ENCODE measurements at regions of chr1 and their contacts with region 1.

Region 1: GRCh38 chr1:25037174-25038074 is 107.3 kb upstream of the RUNX3 start:
- DNase-seq: peak; percentile 75
- ATAC-seq: peak; percentile 22
- H3K4me3 Mint-ChIP-seq: no peak overlapping the region
- H3K27ac Mint-ChIP-seq: peak overlapping the region; percentile 39
- H3K4me1 Mint-ChIP-seq: peaks cover 28% of the 10 kb centered on the region
- H3K27me3 Mint-ChIP-seq: peaks cover 3% of the 10 kb centered on the region

Region 2: GRCh38 chr1:24930204-24931145 is 106.9 kb before region 1 on chr1 and contains the start of gene RUNX3:
- CTCF ChIA-PET with region 1: interaction called, 85 read pairs
- POLR2A ChIA-PET with region 1: interaction called, 3 read pairs
- DNase-seq: peak; percentile 92
- ATAC-seq: peak; percentile 79
- H3K4me3 Mint-ChIP-seq: peak within 1 kb of the TSS; percentile 95
- H3K27ac Mint-ChIP-seq: peak within 1 kb of the TSS; percentile 85
- H3K4me1 Mint-ChIP-seq: peaks cover 80% of the 10 kb centered on the region
- H3K27me3 Mint-ChIP-seq: no peaks in the 10 kb centered on the region
- total RNA-seq, gene RUNX3: 144 to 147 TPM

Region 3: GRCh38 chr1:24955161-24955560 is 82.3 kb before region 1 on chr1:
- CTCF ChIA-PET with region 1: interaction called, 225 read pairs
- POLR2A ChIA-PET with region 1: interaction called, 96 read pairs
- DNase-seq: peak; percentile 90
- ATAC-seq: peak; percentile 81
- H3K4me3 Mint-ChIP-seq: peak overlapping the region; percentile 73
- H3K27ac Mint-ChIP-seq: peak overlapping the region; percentile 94
- H3K4me1 Mint-ChIP-seq: peaks cover 95% of the 10 kb centered on the region
- H3K27me3 Mint-ChIP-seq: no peaks in the 10 kb centered on the region

Region 4: DNA sequence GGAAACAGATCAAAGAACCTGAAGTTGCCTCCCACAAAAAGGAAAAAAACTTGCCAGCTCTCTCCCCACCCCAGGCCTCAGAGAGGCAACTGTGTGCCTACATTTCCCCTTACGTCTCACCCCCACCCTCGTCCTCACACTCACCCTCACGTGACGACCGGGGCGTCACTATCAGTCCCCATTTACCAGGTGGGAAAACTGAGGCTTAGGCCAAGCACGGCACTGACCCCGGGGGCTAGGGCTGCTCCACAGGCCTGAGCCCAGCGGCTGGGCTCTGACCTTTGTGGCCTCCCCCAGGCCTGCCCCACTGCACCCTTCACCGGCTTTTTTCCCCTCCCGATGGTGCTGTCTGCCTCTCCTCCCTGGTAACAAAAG is 55.8 kb before region 1 on chr1:
- CTCF ChIA-PET with region 1: interaction called, 20 read pairs
- POLR2A ChIA-PET with region 1: interaction called, 3 read pairs
- DNase-seq: peak; percentile 70
- ATAC-seq: peak; percentile 52
- H3K4me3 Mint-ChIP-seq: peak overlapping the region; percentile 63
- H3K27ac Mint-ChIP-seq: peak overlapping the region; percentile 93
- H3K4me1 Mint-ChIP-seq: peaks cover 93% of the 10 kb centered on the region
- H3K27me3 Mint-ChIP-seq: no peaks in the 10 kb centered on the region

Region 5: GRCh38 chr1:25006770-25007169 is 30.7 kb before region 1 on chr1:
- CTCF ChIA-PET with region 1: interaction called, 23 read pairs
- POLR2A ChIA-PET with region 1: interaction called, 6 read pairs
- DNase-seq: no peak
- ATAC-seq: no peak
- H3K4me3 Mint-ChIP-seq: no peak overlapping the region
- H3K27ac Mint-ChIP-seq: peak overlapping the region; percentile 36
- H3K4me1 Mint-ChIP-seq: peaks cover 88% of the 10 kb centered on the region
- H3K27me3 Mint-ChIP-seq: no peaks in the 10 kb centered on the region

Region 6: DNA sequence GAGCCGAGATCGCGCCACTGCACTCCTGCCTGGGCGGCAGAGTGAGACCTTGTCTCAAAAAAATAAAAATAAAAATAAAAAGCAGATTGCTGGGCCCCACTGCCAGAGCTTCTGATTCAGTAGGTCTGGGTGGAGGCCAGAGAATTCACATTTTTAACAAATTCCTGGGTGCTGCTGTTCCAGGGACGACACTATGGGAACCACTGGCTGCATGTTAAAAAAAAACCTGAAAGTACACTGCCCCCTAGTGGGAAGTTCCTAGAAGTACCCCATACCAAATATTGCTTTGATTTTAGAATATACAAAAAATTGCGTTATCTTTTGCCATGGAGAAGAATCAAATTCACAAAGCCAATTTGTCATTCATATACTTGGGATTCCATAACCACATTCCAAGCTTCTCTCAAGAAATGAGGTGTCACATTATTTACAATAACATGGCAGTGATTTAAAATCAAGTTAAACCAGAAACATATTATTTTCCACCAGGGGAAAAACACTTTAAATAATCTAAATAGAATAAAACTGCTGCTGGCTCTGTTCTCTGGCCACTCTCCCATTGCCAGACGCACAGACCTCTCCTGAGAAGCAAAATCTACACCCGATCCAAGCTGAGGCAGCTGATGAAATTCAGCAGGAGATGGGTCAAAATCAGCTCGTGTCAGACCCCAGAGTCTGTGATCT is 167.5 kb after region 1 on chr1:
- CTCF ChIA-PET with region 1: interaction called, 13 read pairs
- POLR2A ChIA-PET with region 1: no interaction called
- DNase-seq: peak; percentile 43
- ATAC-seq: no peak
- H3K4me3 Mint-ChIP-seq: no peak overlapping the region
- H3K27ac Mint-ChIP-seq: no peak overlapping the region
- H3K4me1 Mint-ChIP-seq: no peaks in the 10 kb centered on the region
- H3K27me3 Mint-ChIP-seq: peaks cover 21% of the 10 kb centered on the region

Measured in activated CD8-positive, alpha-beta T cell treated with anti-CD3 and anti-CD28 coated beads, Interleukin-2, amount 10 ng/mL, durations not matched to agents 7 days and 5 days (primary cell).